ENCODE measurements at regions of chr19 and their contacts with region 1.

Region 1: GRCh38 chr19:3403489-3404323 is 37.3 kb downstream of the NFIC start:
- DNase-seq: peak; percentile 87 to 98 (median 96)
- ATAC-seq: peak; percentile 72 to 84 (median 78)
- H3K4me3 ChIP-seq: peak overlapping the region in 2 of 4 donors; percentile 33 to 35
- H3K27ac ChIP-seq: peak overlapping the region; percentile 98 to 100 (median 100)
- H3K4me1 ChIP-seq: peaks cover 25 to 36% (median 29%) of the 10 kb centered on the region in 3 donors
- H3K27me3 ChIP-seq: no peaks in the 10 kb centered on the region
- CTCF ChIP-seq: no peak

Region 2: DNA sequence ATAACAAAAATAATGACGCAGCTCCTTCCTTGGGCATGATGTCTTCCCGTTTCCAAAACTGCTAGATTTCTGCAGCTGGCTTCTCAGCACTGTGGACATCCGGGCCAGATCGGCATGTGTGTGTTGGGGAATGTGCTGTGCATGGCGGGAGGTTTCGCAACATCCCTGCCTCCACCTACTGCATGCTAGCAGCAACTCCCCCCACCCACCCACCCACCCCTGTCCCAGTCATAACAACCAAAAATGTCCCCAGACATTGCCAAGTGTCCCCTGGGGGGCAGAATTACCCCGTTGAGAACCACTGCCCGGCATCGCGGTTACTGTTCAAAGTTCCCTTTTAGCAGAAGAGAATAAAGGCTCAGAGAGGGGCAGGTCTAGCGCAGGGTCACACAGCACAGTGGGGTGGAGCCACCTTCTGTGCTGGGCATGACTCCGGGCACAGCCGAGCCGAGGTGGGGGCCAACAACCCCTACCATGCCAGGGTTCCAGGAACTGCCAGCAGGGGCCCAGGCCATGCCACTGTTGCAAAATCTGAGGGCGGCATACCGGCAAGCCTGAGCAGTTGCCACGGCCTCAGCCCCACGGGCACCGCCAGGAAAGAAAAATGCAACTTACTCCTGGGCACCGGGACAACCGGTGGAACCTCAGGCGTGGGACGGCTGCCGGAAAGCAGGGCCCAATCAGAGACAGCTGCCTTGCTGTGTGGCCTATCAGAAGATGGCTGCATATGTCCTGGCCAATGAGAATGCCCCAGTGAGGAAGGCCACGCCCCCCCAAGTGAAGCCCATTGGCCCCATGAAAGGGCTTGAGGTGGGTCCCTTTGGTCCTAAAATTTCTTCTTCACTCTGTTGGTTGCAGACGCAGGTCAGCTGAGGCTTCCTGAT is 59.8 kb before region 1 on chr19:
- intact Hi-C with region 1: loop called in 1 of 3 experiments (anchors 10 kb)
- DNase-seq: peak; percentile 81 to 95 (median 88)
- ATAC-seq: peak; percentile 71 to 82 (median 79)
- H3K4me3 ChIP-seq: peak overlapping the region in 2 of 4 donors; percentile 24 to 45
- H3K27ac ChIP-seq: peak overlapping the region; percentile 39 to 77 (median 76)
- H3K4me1 ChIP-seq: peaks cover 25 to 36% (median 33%) of the 10 kb centered on the region in 3 donors
- H3K27me3 ChIP-seq: no peaks in the 10 kb centered on the region
- CTCF ChIP-seq: no peak